ENCODE measurements at regions of chr17 and their contacts with region 1.

Region 1: GRCh38 chr17:47895856-47896671 is at the start of gene SP2:
- DNase-seq: peak; percentile 99 to 100 (median 100)
- ATAC-seq: peak; percentile 96
- H3K4me3 ChIP-seq: peak within 1 kb of the TSS; percentile 83
- H3K27ac ChIP-seq: peak within 1 kb of the TSS; percentile 90
- H3K4me1 ChIP-seq: peaks cover 3 to 17% of the 10 kb centered on the region in 2 experiments; a peak in 3 of 5 replicates
- H3K27me3 ChIP-seq: no peaks in the 10 kb centered on the region
- CTCF ChIP-seq: no peak; a peak in 1 of 6 replicates
- EP300 ChIP-seq: no peak
- POLR2A ChIP-seq: peak; percentile 69; the same call in 1 of the 2 replicates
- RAD21 ChIP-seq: no peak; a peak in 1 of 4 replicates
- polyA plus RNA-seq, gene SP2: 0.77 to 0.88 TPM

Region 2: DNA sequence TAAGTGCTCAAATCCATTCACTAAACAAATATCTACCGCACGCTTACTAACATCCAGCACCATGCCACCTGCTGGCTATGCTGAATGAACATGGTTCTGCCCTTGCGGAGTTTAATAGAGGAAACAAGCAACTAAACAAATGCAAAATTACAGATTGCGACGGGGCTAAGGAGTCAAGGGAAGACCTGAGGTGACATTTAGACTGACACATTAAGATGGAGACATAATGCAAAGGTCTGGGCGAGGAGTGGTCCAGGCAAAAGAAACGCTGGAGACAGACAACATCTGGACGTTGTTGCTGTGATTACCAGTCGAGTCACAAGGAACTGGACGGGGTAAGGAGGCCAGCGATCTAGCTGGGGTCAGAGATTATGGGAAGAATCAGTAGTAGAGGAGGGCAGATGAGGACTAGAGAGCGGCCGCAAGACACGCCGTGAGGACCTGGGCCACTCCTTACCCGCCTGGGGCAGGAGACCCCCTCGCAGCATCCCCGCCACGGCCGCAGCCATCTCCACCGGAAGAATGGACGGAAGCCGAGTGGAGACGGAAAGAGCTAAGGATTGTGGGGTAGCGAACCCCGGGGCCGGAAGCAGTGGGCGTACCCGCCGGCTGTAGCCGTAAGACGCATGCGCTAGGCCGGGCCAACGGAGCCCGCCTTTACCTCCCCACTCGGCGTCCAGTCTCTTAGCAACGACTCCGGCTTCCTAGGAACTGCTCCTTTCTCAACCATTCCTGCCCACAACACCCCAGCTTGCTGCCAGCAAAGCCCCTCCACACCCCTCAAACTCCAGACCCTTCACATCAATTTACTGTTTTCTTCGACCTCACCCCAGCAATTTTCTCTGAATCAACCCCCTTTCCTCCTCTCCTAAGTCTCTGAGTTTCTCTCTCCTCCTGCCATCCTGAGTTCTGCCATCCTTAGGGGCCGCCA is 64.8 kb before region 1 on chr17 and contains the starts of genes LRRC46 and MRPL10:
- CTCF ChIA-PET with region 1: no interaction called
- POLR2A ChIA-PET with region 1: interaction called, 22 read pairs
- in situ Hi-C with region 1: no loop called
- intact Hi-C with region 1: no loop called
- DNase-seq: peak; percentile 96 to 99 (median 99)
- ATAC-seq: peak; percentile 97
- H3K4me3 ChIP-seq: peak within 1 kb of the TSS; percentile 61
- H3K27ac ChIP-seq: peak within 1 kb of the TSS; percentile 82
- H3K4me1 ChIP-seq: peaks cover 17 to 28% of the 10 kb centered on the region in 2 experiments
- H3K27me3 ChIP-seq: no peaks in the 10 kb centered on the region
- CTCF ChIP-seq: peak; percentile 33 to 45 (median 42); a peak in 5 of 6 replicates
- EP300 ChIP-seq: peak; percentile 37; the same call in 1 of the 2 replicates
- POLR2A ChIP-seq: peak; percentile 97
- RAD21 ChIP-seq: no peak
- polyA plus RNA-seq, gene LRRC46: 0.39 TPM
- polyA plus RNA-seq, gene MRPL10: 27.8 to 47.8 TPM

Region 3: GRCh38 chr17:47850692-47851573 is 45.1 kb before region 1 on chr17 and contains the start of gene SP6:
- CTCF ChIA-PET with region 1: no interaction called
- POLR2A ChIA-PET with region 1: interaction called, 11 read pairs
- in situ Hi-C with region 1: no loop called
- intact Hi-C with region 1: no loop called
- DNase-seq: peak; percentile 89 to 93 (median 92)
- ATAC-seq: peak; percentile 94
- H3K4me3 ChIP-seq: peak within 1 kb of the TSS; percentile 43
- H3K27ac ChIP-seq: peak within 1 kb of the TSS; percentile 65
- H3K4me1 ChIP-seq: peaks cover 33 to 45% of the 10 kb centered on the region in 2 experiments; a peak in 4 of 5 replicates
- H3K27me3 ChIP-seq: peaks cover 0 to 2% of the 10 kb centered on the region in 2 experiments; a peak in 1 of 5 replicates
- CTCF ChIP-seq: peak in 2 of 3 experiments; percentile 26 to 41; a peak in 3 of 6 replicates
- EP300 ChIP-seq: no peak
- POLR2A ChIP-seq: peak; percentile 60
- RAD21 ChIP-seq: peak; percentile 37 to 44; a peak in 3 of 4 replicates
- polyA plus RNA-seq, gene SP6: 0.11 TPM

Region 4: DNA sequence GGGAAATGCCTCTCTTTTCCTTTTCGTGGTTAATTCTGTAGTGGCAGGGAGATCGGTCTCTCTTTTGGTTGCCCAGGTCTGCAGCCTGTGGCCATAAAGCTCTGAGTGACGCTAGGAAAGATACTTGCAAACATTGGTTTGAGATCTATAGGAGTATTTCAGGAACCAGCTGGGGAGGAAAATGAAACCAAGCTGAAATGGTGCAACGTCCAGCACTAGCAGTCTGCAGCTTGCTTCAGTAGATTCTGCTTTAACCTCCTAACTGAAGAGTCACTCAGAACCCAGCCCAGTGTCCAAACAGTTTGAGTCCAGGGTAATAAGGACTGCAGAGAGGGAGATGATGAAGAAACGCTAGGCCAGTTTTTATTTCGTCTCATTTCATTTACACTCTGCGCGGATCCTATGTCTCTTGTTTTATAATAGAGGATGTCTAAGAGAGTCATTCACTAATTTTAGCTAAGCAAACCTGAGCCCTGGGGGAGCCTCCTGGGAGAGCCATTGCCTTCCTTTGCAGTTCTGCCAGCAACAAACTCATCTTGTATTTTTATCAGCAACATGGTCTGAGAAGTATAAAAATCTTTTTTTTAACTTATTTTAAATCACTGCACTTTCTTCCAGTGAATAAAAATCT is 12.0 kb after region 1 on chr17:
- CTCF ChIA-PET with region 1: no interaction called
- POLR2A ChIA-PET with region 1: interaction called, 13 read pairs
- in situ Hi-C with region 1: no loop called
- intact Hi-C with region 1: no loop called
- DNase-seq: no peak
- ATAC-seq: no peak
- H3K4me3 ChIP-seq: no peak overlapping the region
- H3K27ac ChIP-seq: no peak overlapping the region
- H3K4me1 ChIP-seq: no peaks in the 10 kb centered on the region
- H3K27me3 ChIP-seq: no peaks in the 10 kb centered on the region
- CTCF ChIP-seq: no peak
- EP300 ChIP-seq: no peak
- POLR2A ChIP-seq: no peak
- RAD21 ChIP-seq: no peak

Region 5: DNA sequence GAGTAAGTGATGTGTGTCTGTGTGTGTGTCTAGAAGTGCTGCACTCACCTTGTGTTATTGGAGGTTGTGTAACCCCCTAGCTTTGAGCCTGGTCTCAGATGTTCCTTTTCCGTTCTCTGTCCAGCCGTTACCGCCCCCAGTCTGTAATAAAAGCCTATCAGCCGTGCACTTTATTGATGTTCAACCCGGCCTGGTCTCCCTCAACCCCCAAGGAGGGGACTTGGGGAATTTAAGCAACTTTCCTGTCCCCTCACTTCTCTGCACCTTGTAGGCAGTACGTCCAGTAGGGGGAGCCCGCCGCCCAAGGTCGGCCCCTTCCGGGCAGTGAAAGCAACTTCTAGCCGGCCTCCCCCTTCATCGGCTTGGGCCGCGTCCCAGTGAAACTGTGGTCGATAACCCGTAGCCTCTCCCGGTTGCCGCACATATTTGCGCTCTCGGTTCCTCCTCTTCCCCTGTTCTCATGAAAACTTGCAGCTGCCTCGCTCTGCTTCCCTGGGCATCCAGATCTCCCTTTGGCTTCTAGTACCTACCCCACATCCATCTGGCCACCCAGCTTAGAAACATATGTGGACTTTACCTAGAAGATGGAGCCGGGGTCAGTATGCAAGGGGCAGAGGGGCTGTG is 53.2 kb after region 1 on chr17:
- CTCF ChIA-PET with region 1: no interaction called
- POLR2A ChIA-PET with region 1: interaction called, 3 read pairs
- in situ Hi-C with region 1: no loop called
- intact Hi-C with region 1: loop called (anchors 2 kb)
- DNase-seq: peak; percentile 82 to 90 (median 87)
- ATAC-seq: peak; percentile 95
- H3K4me3 ChIP-seq: no peak overlapping the region
- H3K27ac ChIP-seq: peak overlapping the region; percentile 8; the same call in 1 of the 3 replicates
- H3K4me1 ChIP-seq: peaks cover 9% of the 10 kb centered on the region in 2 experiments; a peak in 3 of 5 replicates
- H3K27me3 ChIP-seq: no peaks in the 10 kb centered on the region
- CTCF ChIP-seq: peak; percentile 95 to 97 (median 96)
- EP300 ChIP-seq: no peak; the same call in 1 of the 2 replicates
- POLR2A ChIP-seq: no peak
- RAD21 ChIP-seq: peak; percentile 87 to 90